ENCODE measurements at regions of chr7 and their contacts with region 1.

Region 1: DNA sequence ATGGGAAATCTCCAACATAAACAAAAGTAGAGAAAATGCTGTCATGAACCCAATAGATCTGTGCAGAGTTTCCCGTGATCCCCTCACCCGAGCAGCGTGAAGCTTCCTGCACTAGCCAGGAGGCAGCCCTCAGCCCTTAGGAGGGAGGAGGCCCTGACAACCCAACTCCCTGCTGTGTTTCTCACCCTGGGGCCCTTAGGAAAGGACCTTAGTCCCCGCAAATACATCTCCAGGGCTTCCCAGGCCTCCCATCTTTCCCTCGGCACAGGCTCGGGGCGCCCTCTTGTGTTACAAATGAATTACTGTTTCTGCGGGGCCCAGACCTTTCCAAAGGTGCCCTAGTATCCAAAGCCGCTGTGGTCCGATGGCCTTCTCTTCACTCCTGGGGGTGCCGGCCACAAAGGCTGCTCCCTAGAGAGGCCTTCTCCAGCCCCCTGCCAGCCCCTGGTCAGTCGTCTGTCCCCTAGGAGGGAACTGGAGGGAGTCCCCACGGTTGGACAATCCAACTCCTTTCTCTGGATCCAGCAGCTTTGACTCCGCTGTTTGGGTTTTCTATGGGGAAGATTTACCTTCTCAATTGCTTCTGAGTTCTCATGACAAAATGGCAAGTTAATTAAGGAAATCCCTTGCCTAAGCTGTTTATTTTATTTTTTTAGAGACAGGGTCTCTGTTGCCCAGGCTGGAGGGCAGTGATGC is 49.9 kb upstream of the SH2B2 start:
- DNase-seq: no peak
- ATAC-seq: peak; percentile 91
- H3K4me3 ChIP-seq: no peak overlapping the region
- H3K27ac ChIP-seq: no peak overlapping the region
- H3K4me1 ChIP-seq: peaks cover 8% of the 10 kb centered on the region
- H3K27me3 ChIP-seq: no peaks in the 10 kb centered on the region
- CTCF ChIP-seq: peak; percentile 70 to 91 (median 77)
- EP300 ChIP-seq: no peak
- POLR2A ChIP-seq: no peak
- RAD21 ChIP-seq: peak; percentile 98

Region 2: DNA sequence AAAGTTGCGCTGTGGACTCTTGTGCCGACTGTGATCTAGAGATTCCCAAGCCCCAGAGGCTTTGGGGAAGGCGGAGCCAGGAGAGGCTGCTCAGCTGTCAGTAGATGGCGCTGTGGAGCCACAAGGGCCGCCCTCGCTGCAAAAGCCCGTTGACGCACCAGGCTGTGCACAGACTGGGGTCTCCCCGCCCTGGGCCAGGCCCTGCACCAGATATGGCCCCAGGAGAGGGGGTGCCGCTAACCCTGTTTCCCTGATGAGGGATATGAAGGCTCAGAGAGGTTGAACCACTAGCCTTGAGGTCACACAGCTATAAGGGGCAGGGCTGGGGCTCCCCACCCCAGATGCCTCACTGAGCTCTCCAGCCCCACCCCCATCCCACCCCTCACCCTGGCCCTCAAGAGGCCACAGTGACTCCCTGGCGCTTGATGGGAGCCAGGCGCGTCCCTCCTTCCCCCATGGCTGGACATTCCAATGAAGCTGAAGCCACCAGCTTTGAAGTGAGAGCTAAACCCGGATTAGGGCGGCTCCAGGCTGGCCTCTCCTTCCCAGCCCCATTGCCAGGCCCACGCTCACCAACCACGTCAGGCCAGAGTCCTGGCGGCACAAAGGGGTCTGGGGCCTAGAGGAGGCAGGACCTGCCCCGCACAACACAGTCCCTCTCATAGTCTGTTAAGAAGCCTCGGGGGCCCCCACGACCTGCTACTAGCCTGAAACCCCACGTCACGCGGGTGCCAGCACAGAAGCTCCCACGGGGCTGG is 634.1 kb before region 1 on chr7:
- CTCF ChIA-PET with region 1: interaction called, 7 read pairs
- POLR2A ChIA-PET with region 1: no interaction called
- RAD21 ChIA-PET with region 1: interaction called, 3 read pairs
- SMC1A ChIA-PET with region 1: interaction called, 4 read pairs
- in situ Hi-C with region 1: no loop called
- intact Hi-C with region 1: loop called (anchors 5 kb)
- DNase-seq: peak; percentile 0
- ATAC-seq: peak; percentile 99
- H3K4me3 ChIP-seq: no peak overlapping the region
- H3K27ac ChIP-seq: no peak overlapping the region
- H3K4me1 ChIP-seq: no peaks in the 10 kb centered on the region
- H3K27me3 ChIP-seq: no peaks in the 10 kb centered on the region; a peak in 1 of 4 replicates
- CTCF ChIP-seq: peak; percentile 82 to 92 (median 91)
- EP300 ChIP-seq: no peak
- POLR2A ChIP-seq: no peak
- RAD21 ChIP-seq: peak; percentile 77

Region 3: GRCh38 chr7:101688183-101688831 is 548.4 kb before region 1 on chr7:
- CTCF ChIA-PET with region 1: interaction called, 18 read pairs
- POLR2A ChIA-PET with region 1: interaction called, 4 read pairs
- RAD21 ChIA-PET with region 1: no interaction called
- SMC1A ChIA-PET with region 1: interaction called, 3 read pairs
- in situ Hi-C with region 1: loop called (anchors 5 kb)
- intact Hi-C with region 1: loop called (anchors 2 kb)
- DNase-seq: no peak
- ATAC-seq: peak; percentile 97
- H3K4me3 ChIP-seq: peak overlapping the region; percentile 32; the same call in 1 of the 2 replicates
- H3K27ac ChIP-seq: peak overlapping the region; percentile 58
- H3K4me1 ChIP-seq: peaks cover 6% of the 10 kb centered on the region; the same call in 1 of the 2 replicates
- H3K27me3 ChIP-seq: no peaks in the 10 kb centered on the region
- CTCF ChIP-seq: peak; percentile 73 to 97 (median 79)
- EP300 ChIP-seq: no peak
- POLR2A ChIP-seq: no peak
- RAD21 ChIP-seq: peak; percentile 89

Region 4: GRCh38 chr7:101743241-101743994 is 493.3 kb before region 1 on chr7:
- CTCF ChIA-PET with region 1: interaction called, 13 read pairs
- POLR2A ChIA-PET with region 1: interaction called, 3 read pairs
- RAD21 ChIA-PET with region 1: interaction called, 5 read pairs
- SMC1A ChIA-PET with region 1: interaction called, 3 read pairs
- in situ Hi-C with region 1: no loop called
- intact Hi-C with region 1: no loop called
- DNase-seq: no peak
- ATAC-seq: peak; percentile 57
- H3K4me3 ChIP-seq: peak overlapping the region; percentile 79
- H3K27ac ChIP-seq: peak overlapping the region; percentile 76
- H3K4me1 ChIP-seq: peaks cover 68% of the 10 kb centered on the region
- H3K27me3 ChIP-seq: no peaks in the 10 kb centered on the region
- CTCF ChIP-seq: peak; percentile 42 to 51 (median 49); a peak in 5 of 6 replicates
- EP300 ChIP-seq: no peak
- POLR2A ChIP-seq: no peak
- RAD21 ChIP-seq: peak; percentile 6; the same call in 1 of the 2 replicates

Region 5: GRCh38 chr7:101936611-101937231 is 300.0 kb before region 1 on chr7:
- CTCF ChIA-PET with region 1: interaction called, 4 read pairs
- POLR2A ChIA-PET with region 1: no interaction called
- RAD21 ChIA-PET with region 1: no interaction called
- SMC1A ChIA-PET with region 1: interaction called, 3 read pairs
- in situ Hi-C with region 1: no loop called
- intact Hi-C with region 1: loop called (anchors 10 kb)
- DNase-seq: no peak
- ATAC-seq: no peak
- H3K4me3 ChIP-seq: no peak overlapping the region
- H3K27ac ChIP-seq: no peak overlapping the region
- H3K4me1 ChIP-seq: peaks cover 63% of the 10 kb centered on the region
- H3K27me3 ChIP-seq: no peaks in the 10 kb centered on the region
- CTCF ChIP-seq: no peak
- EP300 ChIP-seq: no peak
- POLR2A ChIP-seq: no peak
- RAD21 ChIP-seq: no peak

Region 6: GRCh38 chr7:102140952-102141370 is 95.8 kb before region 1 on chr7:
- CTCF ChIA-PET with region 1: no interaction called
- POLR2A ChIA-PET with region 1: no interaction called
- RAD21 ChIA-PET with region 1: no interaction called
- SMC1A ChIA-PET with region 1: no interaction called
- in situ Hi-C with region 1: no loop called
- intact Hi-C with region 1: no loop called
- DNase-seq: peak; percentile 37
- ATAC-seq: peak; percentile 87
- H3K4me3 ChIP-seq: no peak overlapping the region
- H3K27ac ChIP-seq: peak overlapping the region; percentile 45
- H3K4me1 ChIP-seq: peaks cover 10% of the 10 kb centered on the region
- H3K27me3 ChIP-seq: no peaks in the 10 kb centered on the region
- CTCF ChIP-seq: no peak
- EP300 ChIP-seq: no peak
- POLR2A ChIP-seq: no peak
- RAD21 ChIP-seq: no peak

Region 7: DNA sequence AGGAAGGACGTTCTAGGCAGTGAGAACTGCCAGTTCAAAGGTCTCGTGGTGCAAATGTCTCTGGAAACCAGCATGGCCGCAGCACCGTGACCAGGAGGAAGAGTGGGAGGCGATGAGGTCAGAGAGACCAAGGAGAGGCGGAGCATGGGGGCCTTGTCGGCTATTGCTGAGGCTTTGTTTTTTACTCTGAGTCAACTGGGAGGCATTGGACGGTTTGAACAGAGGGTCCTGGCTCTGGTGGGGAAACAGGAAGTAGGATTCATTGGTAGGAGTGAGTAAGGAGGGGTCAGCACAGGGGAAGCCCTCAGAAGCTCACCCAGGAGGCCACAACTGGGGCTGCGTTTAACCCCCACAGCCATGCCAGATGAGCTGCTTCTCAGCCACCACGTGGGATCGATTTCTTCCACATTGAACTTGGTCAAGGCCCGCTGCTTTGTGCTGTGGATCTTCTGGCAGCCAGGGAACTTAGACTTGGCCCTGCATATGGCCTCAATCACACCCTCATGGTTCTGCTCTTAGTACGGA is 27.7 kb after region 1 on chr7:
- CTCF ChIA-PET with region 1: no interaction called
- POLR2A ChIA-PET with region 1: no interaction called
- RAD21 ChIA-PET with region 1: no interaction called
- SMC1A ChIA-PET with region 1: no interaction called
- in situ Hi-C with region 1: no loop called
- intact Hi-C with region 1: no loop called
- DNase-seq: no peak
- ATAC-seq: peak; percentile 44
- H3K4me3 ChIP-seq: no peak overlapping the region
- H3K27ac ChIP-seq: no peak overlapping the region
- H3K4me1 ChIP-seq: no peaks in the 10 kb centered on the region
- H3K27me3 ChIP-seq: no peaks in the 10 kb centered on the region; a peak in 1 of 4 replicates
- CTCF ChIP-seq: no peak
- EP300 ChIP-seq: no peak
- POLR2A ChIP-seq: no peak
- RAD21 ChIP-seq: no peak

Region 8: GRCh38 chr7:102390697-102391484 is 154.2 kb after region 1 on chr7:
- CTCF ChIA-PET with region 1: no interaction called
- POLR2A ChIA-PET with region 1: no interaction called
- RAD21 ChIA-PET with region 1: no interaction called
- SMC1A ChIA-PET with region 1: no interaction called
- in situ Hi-C with region 1: no loop called
- intact Hi-C with region 1: no loop called
- DNase-seq: no peak
- ATAC-seq: peak; percentile 92
- H3K4me3 ChIP-seq: no peak overlapping the region
- H3K27ac ChIP-seq: no peak overlapping the region
- H3K4me1 ChIP-seq: peaks cover 16% of the 10 kb centered on the region
- H3K27me3 ChIP-seq: no peaks in the 10 kb centered on the region
- CTCF ChIP-seq: peak; percentile 89 to 93 (median 91)
- EP300 ChIP-seq: no peak
- POLR2A ChIP-seq: no peak; the same call in 1 of the 2 replicates
- RAD21 ChIP-seq: peak; percentile 91

Measured in GM12878 (cell line).